HAP-1 (cell line): ENCODE measurements at regions of chr14 and their contacts with region 1.

Region 1: DNA sequence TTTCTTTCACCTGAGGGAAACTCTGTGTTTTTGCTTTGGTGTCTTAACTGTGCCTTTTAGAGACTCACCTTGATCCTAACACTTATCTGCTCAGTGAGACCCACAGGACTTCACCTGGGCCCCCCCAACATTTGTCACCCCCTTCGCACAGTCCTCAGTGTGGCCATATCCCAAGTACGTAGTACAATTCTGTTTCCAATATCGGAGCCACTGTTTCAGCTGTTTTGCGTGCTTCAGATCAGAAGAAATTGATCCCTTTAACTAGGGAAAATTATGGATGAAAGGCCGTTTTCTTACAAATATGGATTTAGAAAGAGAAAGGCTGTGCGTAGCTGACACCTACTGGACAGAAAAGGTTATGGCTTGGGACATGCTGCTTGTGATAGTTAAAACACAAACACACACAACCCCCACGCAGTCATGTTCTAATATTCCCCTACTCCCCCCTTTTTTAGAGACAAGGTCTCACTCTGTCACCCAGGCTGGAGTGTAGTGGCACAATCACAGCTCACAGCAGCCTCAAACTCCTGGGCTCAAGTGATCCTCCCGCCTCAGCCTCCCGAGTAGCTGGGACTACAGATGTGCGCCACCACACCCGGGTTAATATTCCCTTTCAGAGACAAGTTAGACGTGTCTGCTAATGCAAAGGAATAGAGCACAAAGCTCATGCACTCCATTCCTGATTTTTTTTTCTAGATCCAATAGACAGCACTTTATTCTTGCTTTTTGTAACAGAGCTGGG is 3.6 kb upstream of the SLC7A8 start:
- DNase-seq: peak; percentile 58 to 59
- H3K4me3 ChIP-seq: no peak overlapping the region
- H3K4me1 ChIP-seq: peaks cover 7% of the 10 kb centered on the region
- H3K27me3 ChIP-seq: no peaks in the 10 kb centered on the region

Region 2: DNA sequence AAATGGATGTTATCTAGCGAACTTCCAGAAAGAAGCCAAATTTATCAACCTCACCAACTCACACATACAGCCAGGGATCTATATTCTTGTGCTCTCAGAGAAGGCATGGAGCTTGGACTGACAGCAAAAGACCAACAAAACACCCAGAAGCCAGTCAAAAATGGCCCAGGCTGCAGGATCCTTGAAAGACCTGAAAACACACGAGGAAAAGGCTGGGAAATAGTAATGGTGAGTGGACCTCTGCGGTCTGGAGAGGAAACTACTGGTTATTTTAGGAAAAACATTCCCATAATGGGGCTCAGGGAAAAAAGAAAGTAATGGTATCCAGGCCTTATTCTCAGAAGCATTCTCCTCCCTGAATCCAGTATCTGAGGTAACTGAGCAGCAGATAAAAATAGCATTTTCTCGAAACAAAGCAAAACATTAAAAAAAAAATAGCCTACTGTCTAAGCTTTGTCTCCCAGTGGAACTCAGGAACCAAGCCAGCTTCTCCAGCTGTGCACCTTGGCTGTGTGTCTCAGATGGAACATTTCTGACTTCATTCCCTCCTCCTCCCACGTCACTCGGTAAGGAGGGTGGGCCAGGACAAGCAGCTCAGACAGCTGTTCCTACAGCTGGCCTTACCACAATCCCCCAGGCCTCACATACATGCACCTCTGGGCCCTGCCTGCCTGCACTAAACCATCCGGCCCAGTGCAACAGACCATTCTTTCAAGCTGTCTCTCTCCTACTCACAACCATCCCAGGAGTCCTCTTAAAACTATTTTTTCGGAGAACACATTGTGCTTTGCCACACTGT is 848.0 kb before region 1 on chr14:
- in situ Hi-C with region 1: no loop called
- DNase-seq: no peak
- H3K4me3 ChIP-seq: no peak overlapping the region
- H3K4me1 ChIP-seq: peaks cover 4% of the 10 kb centered on the region
- H3K27me3 ChIP-seq: no peaks in the 10 kb centered on the region

Region 3: DNA sequence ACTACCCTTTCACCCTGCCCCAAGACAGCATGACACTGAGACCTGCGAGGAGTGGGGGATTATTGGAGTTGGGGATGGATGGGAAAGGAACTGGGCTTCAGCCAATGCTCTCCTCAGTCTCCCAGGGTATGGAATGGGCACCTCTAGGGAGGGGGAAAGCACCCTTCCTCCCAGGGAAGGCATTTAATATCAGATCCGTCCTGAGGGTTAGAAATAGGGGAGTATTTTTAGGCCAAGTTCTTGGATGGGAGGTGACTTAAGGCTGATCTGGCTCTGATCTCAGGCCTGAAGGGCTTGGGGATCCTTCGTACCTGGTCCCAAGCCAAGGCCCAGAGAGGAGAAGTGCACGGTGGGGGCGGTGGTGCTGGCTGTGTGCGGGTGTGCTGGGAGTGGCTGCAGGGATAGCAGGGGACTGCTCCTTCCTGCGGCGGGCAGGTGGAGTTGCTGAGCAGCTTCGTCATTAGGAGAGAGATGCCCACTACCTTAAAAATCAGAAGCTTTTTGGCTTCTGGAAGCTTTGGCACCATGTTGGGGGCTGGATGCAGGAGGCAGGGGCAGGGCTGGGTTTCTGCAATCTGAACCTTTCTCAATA is 61.1 kb before region 1 on chr14:
- in situ Hi-C with region 1: loop called (anchors 5 kb)
- DNase-seq: no peak
- H3K4me3 ChIP-seq: no peak overlapping the region
- H3K4me1 ChIP-seq: peaks cover 11% of the 10 kb centered on the region; the same call in 1 of the 2 replicates
- H3K27me3 ChIP-seq: no peaks in the 10 kb centered on the region